HEK293 (cell line): ENCODE measurements at regions of chr6 and their contacts with region 1.

Region 1: GRCh38 chr6:32971581-32972352 is 3.4 kb downstream of the BRD2 start:
- H3K4me3 ChIP-seq: peak overlapping the region; percentile 97
- H3K27ac ChIP-seq: peak overlapping the region; percentile 99
- H3K4me1 ChIP-seq: peaks cover 20% of the 10 kb centered on the region
- CTCF ChIP-seq: no peak; the same call in 1 of the 2 replicates

Region 2: DNA sequence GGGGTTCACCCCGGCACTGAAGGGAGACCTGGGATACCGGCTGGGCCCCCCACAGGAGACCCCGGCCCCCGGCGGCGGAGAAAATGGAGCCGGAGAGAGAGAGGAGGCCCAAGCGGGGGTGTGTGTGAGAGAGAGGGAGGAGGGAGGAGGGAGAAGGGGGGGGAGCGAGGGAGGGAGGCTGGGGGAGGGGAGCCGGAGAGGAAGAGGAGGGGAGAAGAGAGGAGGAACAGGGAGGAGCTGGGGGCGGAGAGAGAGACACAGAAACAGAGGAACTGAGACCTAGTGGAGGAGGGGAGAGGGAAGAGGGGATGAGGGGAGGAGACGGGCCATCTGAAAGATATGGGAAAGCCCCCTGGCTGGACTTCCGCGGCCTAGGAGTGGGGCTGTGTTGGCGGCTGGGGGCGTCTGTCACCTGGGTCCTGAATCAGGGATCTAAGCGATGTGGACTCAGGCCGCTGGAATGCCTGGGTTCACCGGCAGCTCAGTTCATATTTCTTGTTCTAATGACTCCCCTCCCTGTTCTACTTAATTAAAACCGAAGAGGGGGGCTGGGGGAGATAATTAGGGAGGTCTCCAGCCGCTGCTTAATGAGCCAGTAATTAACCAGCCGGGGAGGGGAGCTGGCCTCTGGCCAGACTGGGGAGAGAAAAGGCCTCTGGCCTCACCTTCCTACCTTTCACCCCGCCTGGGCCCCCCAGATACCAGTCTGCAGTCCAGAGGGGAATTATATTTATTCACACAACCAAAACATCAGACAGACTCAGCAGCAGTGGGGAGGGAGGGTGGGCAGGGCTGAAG is 781.5 kb before region 1 on chr6 and contains the start of gene PBX2:
- CTCF ChIA-PET with region 1: no interaction called
- POLR2A ChIA-PET with region 1: interaction called, 24 read pairs
- H3K4me3 ChIP-seq: peak within 1 kb of the TSS; percentile 62
- H3K27ac ChIP-seq: peak within 1 kb of the TSS; percentile 77
- H3K4me1 ChIP-seq: peaks cover 10% of the 10 kb centered on the region
- CTCF ChIP-seq: no peak; the same call in 1 of the 2 replicates

Region 3: GRCh38 chr6:32415511-32416019 is 556.2 kb before region 1 on chr6:
- CTCF ChIA-PET with region 1: no interaction called
- POLR2A ChIA-PET with region 1: no interaction called
- H3K4me3 ChIP-seq: peak overlapping the region; percentile 22
- H3K27ac ChIP-seq: no peak overlapping the region
- H3K4me1 ChIP-seq: no peaks in the 10 kb centered on the region
- CTCF ChIP-seq: peak; percentile 26; the same call in 1 of the 2 replicates

Region 4: DNA sequence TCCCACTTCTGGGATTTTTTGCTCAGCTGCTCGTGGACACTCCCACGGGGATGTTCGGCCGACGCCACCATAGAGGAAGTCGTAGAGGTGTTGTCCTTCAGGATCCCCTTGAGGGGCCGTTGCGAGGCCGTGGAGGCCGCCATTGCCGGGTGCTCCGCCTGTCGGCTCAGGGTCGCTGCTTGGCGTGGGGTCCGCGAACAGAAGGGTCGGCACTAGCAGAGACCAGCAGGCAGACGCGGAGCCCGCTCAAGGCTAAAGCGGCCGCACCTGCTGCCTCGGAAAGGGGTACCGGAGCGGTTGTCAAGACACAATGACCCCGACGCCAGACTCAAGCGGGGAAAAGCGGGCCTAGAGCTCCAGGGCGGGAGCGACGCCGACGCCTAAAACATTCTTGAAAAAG is 92.1 kb before region 1 on chr6:
- CTCF ChIA-PET with region 1: interaction called, 185 read pairs
- POLR2A ChIA-PET with region 1: interaction called, 10 read pairs
- H3K4me3 ChIP-seq: no peak overlapping the region
- H3K27ac ChIP-seq: no peak overlapping the region
- H3K4me1 ChIP-seq: no peaks in the 10 kb centered on the region
- CTCF ChIP-seq: no peak

Region 5: GRCh38 chr6:32940656-32941213 is 31.0 kb before region 1 on chr6 and contains the start of gene HLA-DMB:
- CTCF ChIA-PET with region 1: interaction called, 13 read pairs
- POLR2A ChIA-PET with region 1: interaction called, 100 read pairs
- H3K4me3 ChIP-seq: peak within 1 kb of the TSS; percentile 57
- H3K27ac ChIP-seq: no peak within 1 kb of the TSS
- H3K4me1 ChIP-seq: no peaks in the 10 kb centered on the region
- CTCF ChIP-seq: no peak

Region 6: DNA sequence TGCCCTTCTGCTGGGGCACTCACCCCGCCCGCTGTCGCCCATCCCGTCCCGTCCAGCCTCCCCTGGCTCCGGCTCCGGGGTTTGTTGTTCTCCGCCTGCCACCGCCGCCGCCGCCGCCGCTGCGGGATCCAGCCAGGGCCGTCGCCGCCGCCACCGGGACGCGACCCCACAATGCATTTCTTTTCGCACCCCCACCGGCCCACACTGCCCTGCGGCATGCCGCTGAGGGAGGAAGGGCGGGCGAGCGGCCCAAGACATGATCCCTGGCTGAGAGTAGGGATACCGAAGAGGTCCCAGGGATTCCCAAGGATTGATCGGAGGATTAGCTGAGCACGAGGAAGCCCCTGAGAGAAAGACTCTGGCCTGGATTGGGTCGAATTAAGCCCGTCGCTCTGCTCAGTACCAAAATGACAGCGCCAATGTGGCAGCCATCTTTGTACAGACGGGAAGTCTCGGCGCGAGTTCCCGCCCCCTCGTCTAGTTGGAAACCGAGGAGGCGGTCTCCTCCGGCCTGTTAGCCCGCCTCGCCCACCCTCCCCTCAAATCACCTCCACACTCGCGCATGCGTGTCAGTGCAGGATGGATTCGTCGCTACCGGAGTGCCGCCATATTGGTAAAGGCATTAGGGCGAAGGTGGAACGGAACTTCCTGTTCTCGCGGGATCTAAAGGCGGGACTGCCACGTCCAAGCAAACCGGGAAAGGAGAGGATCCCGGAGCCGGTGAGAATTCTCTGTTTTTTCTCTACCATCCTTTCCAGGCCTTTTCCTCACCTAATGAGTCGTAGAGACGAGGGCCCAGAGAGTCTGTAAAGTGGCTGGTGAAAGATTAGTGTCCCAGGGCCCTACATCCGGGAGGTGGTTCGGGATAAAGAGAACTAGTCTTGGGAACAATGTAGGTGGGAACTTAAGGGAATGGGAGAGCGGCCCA is 228.7 kb after region 1 on chr6 and contains the starts of genes RXRB and SLC39A7:
- CTCF ChIA-PET with region 1: no interaction called
- POLR2A ChIA-PET with region 1: interaction called, 16 read pairs
- H3K4me3 ChIP-seq: peak within 1 kb of the TSS; percentile 75
- H3K27ac ChIP-seq: peak within 1 kb of the TSS; percentile 98
- H3K4me1 ChIP-seq: peaks cover 23% of the 10 kb centered on the region
- CTCF ChIP-seq: no peak

Region 7: GRCh38 chr6:33317669-33318425 is 346.1 kb after region 1 on chr6 and contains the start of gene ZBTB22:
- CTCF ChIA-PET with region 1: no interaction called
- POLR2A ChIA-PET with region 1: interaction called, 14 read pairs
- H3K4me3 ChIP-seq: peak within 1 kb of the TSS; percentile 58
- H3K27ac ChIP-seq: peak within 1 kb of the TSS; percentile 35
- H3K4me1 ChIP-seq: peaks cover 25% of the 10 kb centered on the region
- CTCF ChIP-seq: no peak